ENCODE measurements at regions of chr17 and their contacts with region 1.

Region 1: DNA sequence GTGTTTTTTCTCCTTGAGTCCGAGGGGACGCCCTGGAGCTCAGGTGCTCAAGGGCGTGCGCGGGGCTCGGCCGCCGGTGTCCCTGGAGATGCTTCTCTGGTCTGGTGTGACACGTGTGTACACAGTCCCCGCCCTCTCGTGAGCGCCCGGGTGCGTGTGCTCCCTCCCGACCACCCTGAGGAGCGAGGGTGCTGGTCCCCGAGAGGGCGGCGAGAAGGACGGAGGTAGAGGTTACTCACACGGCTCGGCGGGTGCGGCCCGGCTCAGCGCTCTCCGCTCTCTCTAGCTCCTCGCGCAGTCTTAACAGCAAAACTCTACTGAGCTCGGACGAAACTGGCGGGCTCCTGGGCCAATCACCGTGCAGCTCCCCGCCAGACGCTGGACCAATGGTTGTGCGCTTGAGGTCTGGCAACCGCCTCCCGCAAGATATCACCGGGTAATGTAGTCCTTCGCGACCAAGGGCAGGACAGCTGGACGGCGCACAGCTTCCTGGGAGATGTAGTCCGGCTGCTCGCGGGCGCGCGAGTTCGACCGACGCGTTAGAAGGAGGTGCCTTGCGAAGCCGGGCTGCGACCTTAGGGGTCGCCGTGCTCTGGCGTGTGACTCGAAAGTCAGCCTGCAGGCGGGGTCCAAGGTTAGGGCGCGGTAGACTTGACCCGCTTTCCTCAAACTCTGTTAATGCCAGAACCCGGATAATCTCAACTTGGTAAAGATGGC is at the start of gene SLC25A19:
- DNase-seq: peak; percentile 99
- ATAC-seq: peak; percentile 95
- H3K4me3 Mint-ChIP-seq: peak within 1 kb of the TSS; percentile 86
- H3K27ac Mint-ChIP-seq: peak within 1 kb of the TSS; percentile 100
- H3K4me1 Mint-ChIP-seq: peaks cover 28% of the 10 kb centered on the region
- H3K27me3 Mint-ChIP-seq: no peaks in the 10 kb centered on the region
- total RNA-seq, gene SLC25A19: 67.8 to 79.7 TPM

Region 2: GRCh38 chr17:75154195-75155106 is 134.8 kb before region 1 on chr17 and contains the start of gene JPT1:
- CTCF ChIA-PET with region 1: no interaction called
- POLR2A ChIA-PET with region 1: interaction called, 4 read pairs
- intact Hi-C with region 1: loop called in 1 of 2 experiments (anchors 1 kb)
- DNase-seq: peak; percentile 99
- ATAC-seq: peak; percentile 98
- H3K4me3 Mint-ChIP-seq: peak within 1 kb of the TSS; percentile 96
- H3K27ac Mint-ChIP-seq: peak within 1 kb of the TSS; percentile 89
- H3K4me1 Mint-ChIP-seq: peaks cover 36% of the 10 kb centered on the region
- H3K27me3 Mint-ChIP-seq: no peaks in the 10 kb centered on the region
- total RNA-seq, gene JPT1: 234 to 238 TPM

Region 3: DNA sequence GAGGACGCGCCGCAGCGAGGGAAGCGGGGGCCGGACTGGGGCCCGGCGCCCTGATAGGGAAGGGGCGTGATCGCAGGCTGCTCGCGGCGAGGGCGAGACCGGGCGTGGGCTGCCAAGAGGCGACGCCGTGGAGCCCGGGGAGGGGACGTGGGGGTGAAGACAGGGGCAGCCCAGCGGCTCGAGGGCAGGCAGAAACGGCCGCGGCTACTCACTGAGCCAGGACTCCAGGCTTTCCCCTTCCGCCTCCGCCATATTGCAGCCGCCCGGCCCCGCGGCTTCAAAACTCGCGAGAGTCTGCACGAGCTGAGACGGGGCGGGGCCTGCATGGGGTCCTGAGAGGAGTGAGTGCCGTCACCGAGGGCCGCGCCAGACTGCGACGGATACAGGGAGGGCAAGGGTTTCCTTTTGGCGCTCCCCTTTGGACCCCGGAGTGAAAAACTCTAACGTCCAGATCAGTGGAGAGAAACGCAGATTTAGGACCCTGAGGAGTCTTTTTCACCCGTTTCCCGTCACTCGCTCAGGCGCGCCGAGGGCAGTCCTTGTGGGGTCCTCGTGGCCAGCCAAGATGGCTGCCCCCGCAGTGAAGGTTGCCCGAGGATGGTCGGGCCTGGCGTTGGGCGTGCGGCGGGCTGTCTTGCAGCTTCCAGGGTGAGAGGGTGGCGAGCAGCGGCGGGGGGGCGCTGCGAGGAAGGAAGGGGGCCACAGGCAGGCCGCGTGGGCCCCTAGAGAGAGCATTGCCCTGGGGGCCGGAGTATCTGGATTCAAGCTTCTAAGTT is 27.7 kb before region 1 on chr17 and contains the starts of genes GGA3 and MRPS7:
- CTCF ChIA-PET with region 1: interaction called, 29 read pairs
- POLR2A ChIA-PET with region 1: interaction called, 24 read pairs
- intact Hi-C with region 1: loop called (anchors 1 kb)
- DNase-seq: peak; percentile 98
- ATAC-seq: peak; percentile 91
- H3K4me3 Mint-ChIP-seq: peak within 1 kb of the TSS; percentile 88
- H3K27ac Mint-ChIP-seq: peak within 1 kb of the TSS; percentile 96
- H3K4me1 Mint-ChIP-seq: peaks cover 48% of the 10 kb centered on the region
- H3K27me3 Mint-ChIP-seq: no peaks in the 10 kb centered on the region
- total RNA-seq, gene GGA3: 72.9 to 76.7 TPM
- total RNA-seq, gene MRPS7: 51.4 to 63.8 TPM

Region 4: GRCh38 chr17:75393523-75394331 is 104.5 kb after region 1 on chr17:
- CTCF ChIA-PET with region 1: interaction called, 5 read pairs
- POLR2A ChIA-PET with region 1: interaction called, 12 read pairs
- intact Hi-C with region 1: no loop called
- DNase-seq: peak; percentile 91
- ATAC-seq: peak; percentile 91
- H3K4me3 Mint-ChIP-seq: peak overlapping the region; percentile 91
- H3K27ac Mint-ChIP-seq: peak overlapping the region; percentile 71
- H3K4me1 Mint-ChIP-seq: peaks cover 75% of the 10 kb centered on the region
- H3K27me3 Mint-ChIP-seq: no peaks in the 10 kb centered on the region

Region 5: GRCh38 chr17:75515496-75516254 is 226.4 kb after region 1 on chr17 and contains the start of gene CASKIN2:
- CTCF ChIA-PET with region 1: interaction called, 6 read pairs
- POLR2A ChIA-PET with region 1: no interaction called
- intact Hi-C with region 1: loop called in 1 of 2 experiments (anchors 1 kb)
- DNase-seq: peak; percentile 93
- ATAC-seq: peak; percentile 61
- H3K4me3 Mint-ChIP-seq: peak within 1 kb of the TSS; percentile 68
- H3K27ac Mint-ChIP-seq: no peak within 1 kb of the TSS
- H3K4me1 Mint-ChIP-seq: peaks cover 22% of the 10 kb centered on the region
- H3K27me3 Mint-ChIP-seq: peaks cover 3% of the 10 kb centered on the region
- total RNA-seq, gene CASKIN2: 2.9 to 3.0 TPM

Region 6: GRCh38 chr17:75539967-75540711 is 250.9 kb after region 1 on chr17:
- CTCF ChIA-PET with region 1: no interaction called
- POLR2A ChIA-PET with region 1: no interaction called
- intact Hi-C with region 1: no loop called
- DNase-seq: no peak
- ATAC-seq: no peak
- H3K4me3 Mint-ChIP-seq: no peak overlapping the region
- H3K27ac Mint-ChIP-seq: no peak overlapping the region
- H3K4me1 Mint-ChIP-seq: peaks cover 8% of the 10 kb centered on the region
- H3K27me3 Mint-ChIP-seq: no peaks in the 10 kb centered on the region

Region 7: GRCh38 chr17:75784473-75785015 is 495.3 kb after region 1 on chr17 and contains the start of gene UNK:
- CTCF ChIA-PET with region 1: no interaction called
- POLR2A ChIA-PET with region 1: interaction called, 4 read pairs
- intact Hi-C with region 1: loop called in 1 of 2 experiments (anchors 1 kb)
- DNase-seq: peak; percentile 97
- ATAC-seq: peak; percentile 67
- H3K4me3 Mint-ChIP-seq: peak within 1 kb of the TSS; percentile 91
- H3K27ac Mint-ChIP-seq: peak within 1 kb of the TSS; percentile 100
- H3K4me1 Mint-ChIP-seq: peaks cover 55% of the 10 kb centered on the region
- H3K27me3 Mint-ChIP-seq: peaks cover 1% of the 10 kb centered on the region
- total RNA-seq, gene UNK: 24.5 to 33.7 TPM